PC-3 (cell line): ENCODE measurements at regions of chr9 and their contacts with region 1.

Region 1: DNA sequence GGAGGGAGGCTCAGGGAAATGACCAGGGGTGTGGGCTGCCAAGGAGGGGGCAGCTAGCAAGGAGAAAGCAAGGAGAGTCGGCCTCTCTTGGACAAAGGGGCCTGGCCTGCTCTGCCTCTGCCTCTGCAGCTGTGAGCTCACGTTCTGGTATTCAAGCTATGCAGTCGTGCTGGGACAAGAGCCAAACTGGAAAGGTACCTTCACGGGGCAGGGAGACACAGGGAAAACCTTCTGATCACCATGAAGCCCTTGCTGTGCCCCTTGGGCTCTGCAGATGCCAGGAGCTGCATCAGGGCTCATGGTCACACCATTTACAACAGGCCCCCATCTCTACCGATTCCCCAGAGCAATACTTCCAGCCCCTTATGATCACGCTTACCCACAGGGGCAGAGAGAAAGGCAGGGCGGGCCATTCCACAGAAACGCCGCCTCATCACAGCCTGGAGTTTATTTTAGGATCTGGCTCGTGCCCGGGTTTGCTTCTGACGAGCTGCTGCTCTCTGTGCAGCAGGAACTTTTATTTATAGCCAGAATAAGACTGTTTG is 63.2 kb downstream of the PRRT1B start:
- DNase-seq: peak; percentile 76
- ATAC-seq: peak; percentile 94
- H3K4me3 ChIP-seq: peak overlapping the region; percentile 5; the same call in 1 of the 2 replicates
- H3K27ac ChIP-seq: peak overlapping the region; percentile 12; the same call in 1 of the 2 replicates
- H3K4me1 ChIP-seq: peaks cover 16% of the 10 kb centered on the region
- H3K27me3 ChIP-seq: no peaks in the 10 kb centered on the region
- CTCF ChIP-seq: no peak

Region 2: DNA sequence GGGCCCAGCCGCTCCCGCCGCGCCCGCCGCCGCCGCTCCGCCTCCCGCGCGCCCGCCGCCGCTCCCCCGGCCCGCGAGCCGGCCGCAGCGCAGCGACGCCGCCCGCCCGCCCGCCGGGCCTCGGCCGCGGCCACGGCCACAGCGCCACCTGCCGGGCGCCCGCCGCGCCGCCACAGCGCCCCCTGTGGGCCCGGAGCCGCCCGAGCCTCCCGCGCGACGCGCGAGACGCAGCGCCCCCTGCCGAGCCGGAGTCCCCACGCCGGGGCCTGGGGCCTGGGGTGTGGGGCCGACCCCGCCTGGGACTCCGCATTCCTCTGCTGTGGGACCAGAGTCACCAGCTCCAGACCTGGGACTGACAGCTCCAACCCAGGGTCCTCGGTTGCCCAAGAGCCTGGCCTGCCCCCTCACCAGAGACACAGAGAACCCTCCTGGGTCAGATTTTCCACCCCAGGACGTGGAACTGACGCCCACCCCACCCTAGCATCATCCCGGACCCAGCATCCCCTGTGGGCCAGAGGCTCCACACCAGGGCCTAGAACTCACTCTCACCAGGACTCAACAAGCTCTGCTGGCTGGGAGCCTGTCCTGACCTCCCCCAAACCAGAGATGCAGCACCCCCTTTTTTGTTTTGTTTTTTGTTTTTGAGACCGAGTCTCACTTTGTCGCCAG is 131.5 kb after region 1 on chr9 and contains the start of gene RAPGEF1:
- CTCF ChIA-PET with region 1: interaction called, 4 read pairs
- POLR2A ChIA-PET with region 1: no interaction called
- intact Hi-C with region 1: loop called (anchors 5 kb)
- DNase-seq: peak; percentile 43
- ATAC-seq: peak; percentile 60
- H3K4me3 ChIP-seq: peak within 1 kb of the TSS; percentile 87
- H3K27ac ChIP-seq: peak within 1 kb of the TSS; percentile 20; the same call in 1 of the 2 replicates
- H3K4me1 ChIP-seq: peaks cover 24% of the 10 kb centered on the region
- H3K27me3 ChIP-seq: no peaks in the 10 kb centered on the region
- CTCF ChIP-seq: peak; percentile 67
- total RNA-seq, gene RAPGEF1: 25.2 and 38.0 TPM in 2 replicates